Right ventricle myocardium superior (tissue), 1 donor: ENCODE measurements at regions of chr1 and their contacts with region 1.

Region 1: GRCh38 chr1:2314803-2315673 is 76.3 kb downstream of the MORN1 start:
- DNase-seq: peak; percentile 81
- ATAC-seq: peak; percentile 48

Region 2: DNA sequence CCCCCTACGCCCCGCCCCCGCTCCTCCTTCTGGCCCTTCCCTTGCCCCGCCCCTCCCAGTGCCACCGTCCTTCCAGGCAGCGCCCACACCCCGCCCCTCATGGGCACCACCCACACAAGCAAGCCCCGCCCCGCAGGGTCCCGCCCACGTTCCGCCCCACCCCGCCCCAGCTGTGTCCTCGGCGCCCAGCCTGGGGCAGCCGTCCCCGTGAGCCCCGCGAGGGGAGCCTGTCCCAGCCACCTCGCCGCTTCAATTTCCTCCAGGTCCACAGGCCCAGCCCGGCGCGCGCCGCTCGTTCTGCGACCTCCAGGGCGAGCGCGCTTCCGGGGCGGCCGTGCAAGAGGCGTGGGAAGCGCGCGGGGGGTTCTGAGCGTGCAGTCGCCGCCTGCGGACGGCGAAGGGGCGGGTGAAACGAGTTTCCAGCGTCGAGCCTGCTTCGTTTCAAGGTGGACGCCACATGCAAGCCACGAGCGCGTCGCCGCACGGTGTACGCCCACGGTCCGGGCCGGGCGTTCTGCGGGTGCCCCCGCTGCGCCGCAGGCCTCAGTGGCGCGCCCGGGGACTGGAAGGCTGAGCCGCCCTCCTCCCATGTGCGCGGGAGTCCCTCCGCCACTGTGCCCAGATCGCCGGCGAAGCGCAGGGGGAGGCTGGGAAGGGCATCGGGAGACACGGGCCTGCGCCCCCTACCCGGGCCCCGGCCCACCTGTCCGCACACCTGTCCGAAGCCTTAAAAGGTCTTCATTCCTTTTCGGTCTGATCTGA is 109.7 kb before region 1 on chr1:
- intact Hi-C with region 1: loop called (anchors 2 kb)
- DNase-seq: peak; percentile 98
- ATAC-seq: peak; percentile 81

Region 3: GRCh38 chr1:2233997-2234761 is 80.9 kb before region 1 on chr1:
- intact Hi-C with region 1: loop called (anchors 5 kb)
- DNase-seq: peak; percentile 96
- ATAC-seq: peak; percentile 69

Region 4: DNA sequence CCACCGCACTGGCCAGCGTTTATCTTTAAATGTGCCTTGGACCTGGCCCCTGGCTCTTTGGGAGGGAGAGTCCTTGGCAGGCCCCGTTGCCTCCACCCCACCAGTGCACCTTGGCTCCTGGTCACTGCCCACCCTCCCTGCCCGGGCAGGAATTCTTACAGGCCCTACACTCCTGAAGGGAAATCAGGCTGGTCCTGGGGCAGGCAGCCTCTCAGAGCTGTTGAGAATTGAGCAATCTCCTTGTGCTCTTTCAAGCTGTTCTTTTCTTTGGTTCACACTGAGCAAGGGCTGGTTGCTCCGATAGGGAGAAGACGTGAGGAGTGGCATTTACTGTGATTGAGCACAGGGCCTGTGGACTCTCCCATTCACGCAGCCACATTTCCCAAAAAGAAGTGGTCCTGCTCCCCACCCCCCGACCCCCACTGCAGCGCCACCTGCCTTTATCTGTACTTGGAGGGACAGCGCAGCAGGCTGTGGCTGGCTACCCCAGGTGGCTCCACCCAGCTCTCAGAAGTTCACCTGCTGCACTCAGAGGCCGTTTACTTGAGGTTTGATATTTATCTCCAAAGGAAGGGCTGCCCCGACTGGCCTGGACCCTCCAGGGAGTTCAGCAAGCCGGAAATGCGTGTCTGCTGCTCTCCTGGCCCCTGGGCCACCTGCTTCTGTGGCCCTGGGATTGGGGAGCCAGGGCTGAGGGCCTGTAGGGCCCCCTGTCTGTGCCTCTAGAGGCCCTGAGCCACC is 39.1 kb before region 1 on chr1:
- intact Hi-C with region 1: no loop called
- DNase-seq: no peak
- ATAC-seq: peak; percentile 53

Region 5: DNA sequence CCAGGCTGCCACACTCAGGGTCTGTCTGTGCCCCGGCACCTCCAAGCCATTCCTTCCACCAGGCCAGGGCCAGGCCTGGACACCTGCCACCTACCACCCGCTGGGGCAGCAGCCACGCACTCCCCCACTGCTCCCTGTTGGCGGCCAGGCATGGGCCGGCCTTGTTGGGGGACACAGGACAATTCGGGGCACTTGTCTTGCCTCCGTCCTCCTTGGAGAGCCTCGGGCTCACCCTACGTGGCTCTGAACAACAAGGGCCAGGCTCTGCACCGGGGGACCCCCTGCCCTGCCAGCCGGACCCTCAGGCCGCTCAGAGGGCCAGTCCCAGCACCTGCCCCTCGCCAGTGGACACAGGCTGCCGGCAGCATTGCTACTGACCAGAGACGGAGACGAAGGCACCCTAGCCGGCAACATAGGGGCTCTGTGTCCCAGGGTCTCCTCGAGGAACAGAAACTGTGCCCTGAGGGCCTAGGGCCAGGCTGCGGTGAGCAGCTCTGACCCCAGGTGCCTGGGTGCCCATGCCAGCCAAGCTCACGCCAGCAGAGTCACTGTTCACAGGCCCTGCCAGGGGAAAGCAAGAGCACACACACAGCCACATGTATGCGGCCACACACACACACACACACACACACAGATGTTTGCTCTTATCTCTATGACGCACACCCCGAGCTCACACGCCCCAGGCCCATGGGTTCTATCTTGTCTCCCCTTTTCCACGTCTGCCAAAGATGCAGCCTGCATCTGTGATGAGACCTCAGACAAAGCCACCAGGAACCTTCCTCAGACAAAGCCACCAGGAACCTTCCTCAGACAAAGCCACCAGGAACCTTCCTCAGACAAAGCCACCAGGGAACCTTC is 30.4 kb after region 1 on chr1:
- intact Hi-C with region 1: no loop called
- DNase-seq: peak; percentile 34
- ATAC-seq: no peak